Activated CD4-positive, alpha-beta T cell treated with anti-CD3 and anti-CD28 coated beads for 36 hours (primary cell): ENCODE measurements at regions of chr18 and their contacts with region 1.

Region 1: DNA sequence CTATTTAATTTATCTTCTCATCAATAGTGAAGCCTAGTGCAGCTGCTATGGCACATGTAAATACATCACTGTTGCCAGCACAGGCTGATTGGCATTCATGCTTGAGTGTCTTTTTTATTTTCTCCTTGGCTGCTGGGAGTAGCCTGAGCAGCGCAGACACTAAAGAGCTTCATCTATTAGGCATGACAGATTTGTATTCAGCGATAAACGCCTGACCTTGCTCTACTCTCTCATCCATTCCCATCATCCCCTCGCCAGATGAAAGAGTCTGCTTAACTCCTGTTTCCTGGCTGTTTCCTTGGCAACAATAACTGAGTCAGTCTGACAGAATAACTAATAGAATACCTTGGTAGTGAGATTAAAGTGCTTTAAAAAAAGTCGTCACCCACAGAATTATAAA is 753.6 kb downstream of the DCC start:
- DNase-seq: no peak
- ATAC-seq: no peak
- H3K4me3 Mint-ChIP-seq: no peak overlapping the region
- H3K27ac Mint-ChIP-seq: no peak overlapping the region
- H3K4me1 Mint-ChIP-seq: no peaks in the 10 kb centered on the region
- H3K27me3 Mint-ChIP-seq: no peaks in the 10 kb centered on the region

Region 2: GRCh38 chr18:51687845-51688585 is 1405.6 kb before region 1 on chr18:
- CTCF ChIA-PET with region 1: no interaction called
- POLR2A ChIA-PET with region 1: no interaction called
- intact Hi-C with region 1: loop called in 1 of 2 experiments (anchors 5 kb)
- DNase-seq: no peak
- ATAC-seq: no peak
- H3K4me3 Mint-ChIP-seq: no peak overlapping the region
- H3K27ac Mint-ChIP-seq: no peak overlapping the region
- H3K4me1 Mint-ChIP-seq: no peaks in the 10 kb centered on the region
- H3K27me3 Mint-ChIP-seq: no peaks in the 10 kb centered on the region